ENCODE measurements at regions of chr16 and their contacts with region 1.

Region 1: DNA sequence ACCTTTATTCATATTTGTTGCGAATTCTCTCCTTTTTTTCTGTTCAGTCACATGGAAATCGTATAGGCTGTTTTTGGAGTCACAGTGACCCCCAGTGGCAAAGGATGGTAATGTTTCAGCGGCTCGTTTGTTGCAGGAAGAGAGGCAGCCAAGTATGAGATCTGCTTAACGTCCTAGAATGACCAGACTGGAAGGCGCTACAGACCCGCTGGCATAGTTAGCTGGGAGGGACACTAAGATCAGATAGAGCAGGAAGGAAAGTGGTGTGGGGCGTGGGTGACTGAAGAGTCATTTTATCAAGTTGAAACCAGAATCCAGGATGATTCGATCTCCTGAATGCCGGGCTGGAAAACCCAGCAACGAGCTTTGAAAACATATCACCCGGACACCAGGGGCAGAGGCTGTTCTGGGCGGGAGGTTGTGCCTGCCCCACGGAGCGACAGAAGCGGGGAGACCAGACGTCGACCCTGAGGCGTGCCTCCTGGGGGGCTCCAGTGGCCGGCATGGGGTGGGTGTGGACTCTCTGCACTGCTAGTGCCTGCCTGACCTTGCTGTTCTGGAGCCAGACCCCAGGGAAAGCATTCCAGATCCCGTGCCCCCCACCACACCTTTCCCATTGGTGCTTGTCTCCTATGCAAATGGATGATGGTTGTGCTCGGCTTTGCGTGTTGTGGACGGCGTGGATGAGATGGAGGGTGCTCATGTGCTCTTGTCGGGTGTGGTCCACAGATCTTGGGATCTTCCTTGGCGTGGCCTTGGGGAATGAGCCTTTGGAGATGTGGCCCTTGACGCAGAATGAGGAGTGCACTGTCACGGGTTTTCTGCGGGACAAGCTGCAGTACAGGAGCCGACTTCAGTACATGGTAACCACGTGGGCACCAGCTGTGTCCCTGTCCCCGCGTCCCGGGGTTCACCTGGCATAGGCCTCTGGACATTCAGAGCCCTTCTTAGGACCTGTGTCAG is 7.7 kb downstream of the IL34 start:
- DNase-seq: peak; percentile 88

Region 2: GRCh38 chr16:70364399-70364798 is 289.7 kb before region 1 on chr16:
- intact Hi-C with region 1: loop called (anchors 10 kb)
- DNase-seq: no peak

Region 3: DNA sequence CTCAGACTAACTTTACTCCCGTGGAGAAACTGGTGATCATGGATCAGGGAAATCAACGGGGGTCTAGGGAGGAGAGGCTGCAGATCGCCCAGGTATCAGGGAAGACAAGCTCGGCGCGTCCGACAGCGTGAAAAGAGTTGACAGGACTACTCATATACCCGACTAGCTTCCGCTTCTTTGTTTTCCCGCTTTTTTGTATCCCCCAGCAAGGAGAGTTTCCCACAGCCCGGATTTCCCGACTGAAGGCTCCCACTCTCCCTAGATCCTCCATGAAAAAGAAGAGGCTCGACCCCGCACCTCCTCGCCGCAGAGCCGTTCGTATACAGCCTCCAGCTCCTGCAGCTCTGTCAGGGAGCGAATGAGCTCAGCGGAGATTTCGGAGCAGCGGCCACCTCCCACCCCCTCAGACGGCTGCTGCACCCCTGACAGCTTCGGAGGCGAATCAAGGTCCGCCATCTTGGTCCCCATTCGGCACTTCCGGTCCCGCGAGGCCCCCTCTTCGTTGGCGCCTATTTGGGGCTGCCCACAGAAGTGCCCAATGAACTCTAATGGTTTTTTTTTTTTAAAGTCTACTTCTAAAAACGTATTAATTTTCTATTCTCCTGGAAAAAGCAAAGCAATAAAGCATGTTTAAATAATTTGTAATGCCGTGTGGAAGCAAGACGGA is 130.9 kb before region 1 on chr16 and contains the start of gene COG4:
- intact Hi-C with region 1: loop called in 1 of 2 experiments (anchors 10 kb)
- DNase-seq: peak; percentile 96
- total RNA-seq, gene COG4: 29.3 to 39.1 TPM

Region 4: GRCh38 chr16:70534971-70535370 is 119.1 kb before region 1 on chr16:
- intact Hi-C with region 1: loop called in 1 of 2 experiments (anchors 10 kb)
- DNase-seq: no peak

Region 5: DNA sequence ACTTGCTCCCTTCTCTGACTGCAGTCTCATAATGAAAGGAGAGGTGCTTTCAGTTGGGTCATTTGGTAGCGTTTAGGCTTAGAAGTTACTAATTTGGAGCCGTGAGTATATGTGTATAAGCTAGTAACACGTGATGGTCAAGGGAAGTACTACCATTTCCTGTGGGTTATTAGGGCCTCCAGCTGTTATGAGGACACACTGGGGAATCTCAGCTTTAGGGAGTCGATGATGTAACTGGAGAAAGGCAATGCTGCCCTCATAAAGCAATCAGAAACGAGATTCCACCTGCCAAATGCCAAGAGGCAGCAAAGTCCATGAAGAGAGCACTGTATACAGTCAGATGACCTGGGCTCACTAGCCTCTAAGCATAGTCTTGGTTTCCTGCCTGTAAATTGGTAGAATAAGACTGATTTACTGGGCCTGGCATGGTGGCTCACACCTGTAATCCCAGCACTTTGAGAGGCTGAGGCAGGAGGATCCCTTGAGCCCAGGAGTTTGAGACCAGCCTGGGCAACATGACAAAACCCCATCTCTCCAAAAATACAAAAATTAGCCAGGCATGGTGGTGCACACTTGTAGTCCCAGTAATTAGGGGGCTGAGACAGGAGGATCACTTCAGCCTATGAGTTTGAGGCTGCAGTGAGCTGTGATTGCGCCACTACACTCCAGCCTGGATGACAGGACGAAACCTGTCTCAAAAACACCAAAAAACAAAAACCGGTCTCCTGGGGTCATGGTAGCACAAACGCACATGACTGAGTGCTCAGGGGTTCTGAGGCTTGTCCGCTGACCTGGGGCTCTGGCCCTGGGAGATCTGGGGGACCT is 77.4 kb before region 1 on chr16:
- intact Hi-C with region 1: loop called (anchors 10 kb)
- DNase-seq: peak; percentile 35

Region 6: GRCh38 chr16:70770626-70771552 is 116.8 kb after region 1 on chr16:
- intact Hi-C with region 1: no loop called
- DNase-seq: no peak